H1 (cell line): ENCODE measurements at regions of chr1 and their contacts with region 1.

Region 1: DNA sequence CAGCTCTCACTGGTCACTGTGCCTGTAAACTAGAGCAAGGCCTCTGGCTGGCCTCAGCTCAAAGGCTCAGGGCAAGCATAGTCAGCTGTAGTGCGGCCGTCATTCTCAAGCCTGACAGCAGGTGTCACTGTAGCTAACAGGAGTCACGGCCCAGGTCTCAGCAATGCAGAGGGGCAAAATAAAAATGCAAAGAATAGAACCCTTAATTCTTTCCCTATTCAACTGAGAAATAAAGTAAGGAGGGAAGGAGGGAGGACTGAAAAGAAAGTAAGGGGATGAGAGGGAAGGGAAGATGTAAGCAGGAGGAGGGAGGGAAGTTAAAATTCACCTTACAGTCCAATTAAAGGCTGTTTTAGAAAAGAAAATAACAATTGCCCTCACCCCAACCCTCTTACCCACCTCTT is 106.1 kb downstream of the KIAA0319L start:
- DNase-seq: peak; percentile 25 to 89
- H3K4me3 ChIP-seq: no peak overlapping the region
- H3K27ac ChIP-seq: no peak overlapping the region
- H3K4me1 ChIP-seq: no peaks in the 10 kb centered on the region
- H3K27me3 ChIP-seq: no peaks in the 10 kb centered on the region
- CTCF ChIP-seq: peak; percentile 88 to 91 (median 89)
- EP300 ChIP-seq: no peak
- POLR2A ChIP-seq: no peak
- RAD21 ChIP-seq: peak; percentile 83 to 87

Region 2: DNA sequence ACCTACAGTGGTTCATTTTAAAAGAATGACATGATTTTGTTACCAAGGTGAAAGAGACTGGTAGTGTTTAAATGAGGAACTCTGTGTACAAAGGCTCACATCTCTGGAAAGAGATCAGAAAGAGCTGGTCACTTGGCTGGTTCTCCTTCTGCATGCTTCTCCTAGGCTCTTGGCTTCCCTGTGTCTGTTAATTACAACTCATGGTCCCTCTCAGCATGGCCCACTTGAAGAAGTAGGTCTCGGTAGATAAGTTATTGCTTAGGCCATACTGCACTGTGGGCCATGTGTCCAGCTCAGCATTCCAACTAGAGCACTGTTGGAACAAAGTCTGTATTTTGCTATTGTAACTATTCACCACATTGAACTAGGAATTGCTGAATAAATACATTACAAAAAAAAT is 15.0 kb after region 1 on chr1:
- CTCF ChIA-PET with region 1: interaction called, 12 read pairs
- POLR2A ChIA-PET with region 1: interaction called, 3 read pairs
- DNase-seq: no peak
- H3K4me3 ChIP-seq: no peak overlapping the region
- H3K27ac ChIP-seq: no peak overlapping the region
- H3K4me1 ChIP-seq: peaks cover 0 to 3% (median 0%) of the 10 kb centered on the region in 4 experiments; a peak in 1 of 7 replicates
- H3K27me3 ChIP-seq: no peaks in the 10 kb centered on the region
- CTCF ChIP-seq: no peak
- EP300 ChIP-seq: no peak
- POLR2A ChIP-seq: no peak
- RAD21 ChIP-seq: no peak

Region 3: GRCh38 chr1:35499652-35500176 is 48.6 kb after region 1 on chr1:
- CTCF ChIA-PET with region 1: interaction called, 10 read pairs
- POLR2A ChIA-PET with region 1: no interaction called
- DNase-seq: no peak
- H3K4me3 ChIP-seq: no peak overlapping the region
- H3K27ac ChIP-seq: no peak overlapping the region
- H3K4me1 ChIP-seq: no peaks in the 10 kb centered on the region
- H3K27me3 ChIP-seq: no peaks in the 10 kb centered on the region
- CTCF ChIP-seq: no peak
- EP300 ChIP-seq: no peak
- POLR2A ChIP-seq: no peak
- RAD21 ChIP-seq: no peak

Region 4: DNA sequence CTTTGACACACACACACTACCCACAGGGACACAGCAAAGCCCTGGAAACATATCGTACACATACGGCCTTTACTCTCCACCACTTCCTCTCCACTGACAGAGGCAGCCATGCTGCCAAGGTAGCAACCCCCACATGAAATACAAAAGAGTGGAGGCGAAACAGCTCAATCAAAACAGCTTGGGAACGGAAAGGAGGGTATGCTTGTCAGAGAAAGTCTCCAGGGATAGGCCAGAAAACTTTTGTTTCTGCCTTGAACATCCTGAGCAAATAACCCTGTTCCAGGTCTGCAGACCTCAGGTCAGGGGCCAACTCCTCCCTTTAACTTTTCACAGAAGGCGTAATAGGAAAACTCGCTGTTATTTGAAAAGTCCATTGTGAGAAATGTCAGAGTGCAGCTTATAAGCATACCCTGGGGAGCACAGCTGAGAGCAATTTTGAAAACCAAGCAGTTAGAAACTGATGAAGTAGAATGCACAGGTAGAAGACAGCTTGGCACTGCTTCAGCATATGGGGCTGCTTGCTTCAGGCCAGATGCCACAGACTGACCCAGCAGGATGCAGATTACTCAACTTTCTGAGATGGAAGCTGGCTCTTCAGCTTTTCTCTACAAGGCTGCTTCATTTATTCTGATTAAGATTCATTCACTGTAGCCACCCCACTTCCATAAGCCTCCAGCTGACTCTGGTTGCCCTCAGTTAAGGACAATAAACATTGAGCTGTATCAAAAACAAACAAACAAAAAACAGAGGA is 88.1 kb after region 1 on chr1:
- CTCF ChIA-PET with region 1: interaction called, 95 read pairs
- POLR2A ChIA-PET with region 1: interaction called, 6 read pairs
- DNase-seq: no peak
- H3K4me3 ChIP-seq: no peak overlapping the region
- H3K27ac ChIP-seq: no peak overlapping the region
- H3K4me1 ChIP-seq: peaks cover 0 to 6% (median 4%) of the 10 kb centered on the region in 4 experiments; a peak in 5 of 7 replicates
- H3K27me3 ChIP-seq: no peaks in the 10 kb centered on the region
- CTCF ChIP-seq: no peak
- EP300 ChIP-seq: no peak
- POLR2A ChIP-seq: no peak
- RAD21 ChIP-seq: no peak

Region 5: GRCh38 chr1:35557292-35558063 is 106.4 kb after region 1 on chr1 and contains the starts of genes KIAA0319L and NCDN:
- CTCF ChIA-PET with region 1: interaction called, 72 read pairs
- POLR2A ChIA-PET with region 1: interaction called, 3 read pairs
- DNase-seq: peak; percentile 95 to 98
- H3K4me3 ChIP-seq: peak within 1 kb of the TSS; percentile 72 to 91 (median 80)
- H3K27ac ChIP-seq: peak within 1 kb of the TSS; percentile 96
- H3K4me1 ChIP-seq: peaks cover 7 to 20% (median 16%) of the 10 kb centered on the region in 4 experiments; a peak in 6 of 7 replicates
- H3K27me3 ChIP-seq: no peaks in the 10 kb centered on the region
- CTCF ChIP-seq: no peak
- EP300 ChIP-seq: 0 out of 3 replicates have a peak, but pooled peaks of 1 of the 2 experiments have one; percentile 21
- POLR2A ChIP-seq: peak in 1 of 2 experiments; percentile 44; a peak in 1 of 3 replicates
- RAD21 ChIP-seq: no peak
- total RNA-seq, gene KIAA0319L: 49.4 and 55.7 TPM in 2 replicates
- total RNA-seq, gene NCDN: 35.4 and 36.5 TPM in 2 replicates